Astrocyte of the cerebellum (primary cell): ENCODE measurements at regions of chr7 and their contacts with region 1.

Region 1: DNA sequence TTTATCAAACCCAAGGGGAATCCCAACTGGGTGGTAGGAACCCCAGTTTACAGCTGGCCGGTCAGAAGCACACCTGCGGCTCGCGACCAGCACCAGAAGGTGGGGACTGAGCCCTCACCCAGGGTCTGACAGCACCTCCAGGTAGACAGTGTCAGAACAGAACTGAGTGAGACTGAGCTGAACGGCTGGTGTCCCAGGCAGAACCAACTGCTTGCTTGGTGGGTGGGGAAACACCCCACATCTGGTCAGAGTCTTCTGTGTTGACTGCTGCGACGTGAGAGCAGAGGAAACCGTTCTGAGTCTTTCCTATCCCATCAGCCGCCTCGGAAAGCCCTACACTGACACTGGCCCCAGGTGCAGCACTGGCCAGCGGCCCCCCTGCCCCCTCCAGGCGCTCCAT is 160.7 kb downstream of the MAD1L1 start:
- DNase-seq: no peak
- H3K4me3 ChIP-seq: no peak overlapping the region
- CTCF ChIP-seq: no peak

Region 2: DNA sequence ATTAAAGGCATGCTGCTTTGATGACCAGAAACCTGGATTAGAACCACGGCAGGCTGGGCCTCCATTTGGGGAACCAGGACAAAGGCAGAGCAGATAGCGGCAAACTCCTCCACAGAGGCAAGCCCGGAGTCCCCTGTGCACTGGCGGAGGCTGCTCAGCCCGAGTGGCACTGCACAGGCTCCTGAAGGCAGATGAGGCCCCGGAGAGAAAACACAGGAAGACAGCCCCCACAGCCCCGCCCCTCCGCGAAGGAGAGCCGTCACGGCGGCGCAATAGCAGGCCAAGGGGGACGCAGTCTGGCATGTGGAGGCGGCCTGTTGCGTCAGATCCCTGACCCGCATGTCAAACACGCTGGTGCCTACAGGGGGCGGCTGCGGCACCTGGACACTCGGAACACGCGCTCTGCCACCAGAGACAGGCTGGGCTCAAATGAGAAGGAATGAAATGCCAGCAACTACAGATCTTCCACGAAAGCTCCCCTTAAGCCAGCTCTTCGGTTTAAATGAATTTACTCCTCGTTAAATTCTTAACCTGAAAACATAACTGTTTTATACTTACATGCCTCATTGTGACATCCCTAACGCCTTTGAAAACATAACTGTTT is 32.2 kb after region 1 on chr7:
- in situ Hi-C with region 1: no loop called
- DNase-seq: peak; percentile 44
- H3K4me3 ChIP-seq: no peak overlapping the region
- CTCF ChIP-seq: peak; percentile 68

Region 3: DNA sequence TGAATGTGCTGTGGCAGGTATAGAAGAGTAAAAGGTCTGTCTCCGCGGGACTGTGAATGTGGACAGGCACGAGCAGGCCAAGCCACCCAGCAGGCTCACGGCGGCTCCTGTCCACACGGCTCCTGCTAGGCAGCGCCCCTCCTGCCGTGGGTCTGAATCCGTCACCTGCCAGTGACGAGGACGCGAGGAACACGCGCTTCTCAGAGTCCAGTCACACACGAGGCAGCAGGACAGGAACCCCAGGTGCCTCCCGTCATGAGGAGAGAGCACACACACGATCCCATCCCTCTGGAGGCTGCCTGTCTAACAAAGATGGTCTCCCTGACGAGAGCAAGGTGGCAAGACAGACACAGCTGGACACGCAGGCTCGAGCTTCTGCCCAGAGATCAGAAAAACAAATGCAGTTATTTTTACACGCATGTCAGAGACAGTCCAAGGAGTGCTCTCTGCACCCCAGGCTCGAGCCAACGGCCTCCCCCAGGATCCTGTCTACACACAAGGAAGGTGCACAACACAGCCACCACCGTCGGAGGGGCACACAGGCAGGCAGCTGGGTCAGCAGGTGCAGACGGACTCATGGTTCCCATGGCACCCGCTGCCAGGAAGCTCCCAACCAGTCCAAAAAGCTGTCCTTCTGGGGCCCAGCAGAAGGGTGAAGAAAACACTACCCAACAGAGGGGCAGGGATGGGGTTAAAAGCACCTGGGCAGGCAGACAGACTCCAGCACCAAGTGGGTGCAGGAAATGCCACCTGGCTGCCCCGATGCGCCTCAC is 57.5 kb after region 1 on chr7:
- in situ Hi-C with region 1: loop called (anchors 5 kb)
- DNase-seq: no peak
- H3K4me3 ChIP-seq: no peak overlapping the region
- CTCF ChIP-seq: no peak